Endothelial cell of umbilical vein (primary cell): ENCODE measurements at regions of chr12 and their contacts with region 1.

Region 1: GRCh38 chr12:3135522-3136461 is 58.6 kb downstream of the TSPAN9 start:
- DNase-seq: peak; percentile 69
- H3K4me3 ChIP-seq: no peak overlapping the region
- H3K27ac ChIP-seq: no peak overlapping the region
- H3K4me1 ChIP-seq: peaks cover 11% of the 10 kb centered on the region
- H3K27me3 ChIP-seq: no peaks in the 10 kb centered on the region
- CTCF ChIP-seq: peak; percentile 75 to 79
- POLR2A ChIP-seq: no peak

Region 2: GRCh38 chr12:3122835-3123678 is 12.7 kb before region 1 on chr12:
- CTCF ChIA-PET with region 1: interaction called, 19 read pairs
- POLR2A ChIA-PET with region 1: no interaction called
- dilution Hi-C with region 1: no loop called
- intact Hi-C with region 1: no loop called
- DNase-seq: peak; percentile 98
- H3K4me3 ChIP-seq: no peak overlapping the region
- H3K27ac ChIP-seq: peak overlapping the region; percentile 65
- H3K4me1 ChIP-seq: peaks cover 18% of the 10 kb centered on the region
- H3K27me3 ChIP-seq: no peaks in the 10 kb centered on the region
- CTCF ChIP-seq: peak; percentile 15 to 41
- POLR2A ChIP-seq: peak; percentile 72

Region 3: DNA sequence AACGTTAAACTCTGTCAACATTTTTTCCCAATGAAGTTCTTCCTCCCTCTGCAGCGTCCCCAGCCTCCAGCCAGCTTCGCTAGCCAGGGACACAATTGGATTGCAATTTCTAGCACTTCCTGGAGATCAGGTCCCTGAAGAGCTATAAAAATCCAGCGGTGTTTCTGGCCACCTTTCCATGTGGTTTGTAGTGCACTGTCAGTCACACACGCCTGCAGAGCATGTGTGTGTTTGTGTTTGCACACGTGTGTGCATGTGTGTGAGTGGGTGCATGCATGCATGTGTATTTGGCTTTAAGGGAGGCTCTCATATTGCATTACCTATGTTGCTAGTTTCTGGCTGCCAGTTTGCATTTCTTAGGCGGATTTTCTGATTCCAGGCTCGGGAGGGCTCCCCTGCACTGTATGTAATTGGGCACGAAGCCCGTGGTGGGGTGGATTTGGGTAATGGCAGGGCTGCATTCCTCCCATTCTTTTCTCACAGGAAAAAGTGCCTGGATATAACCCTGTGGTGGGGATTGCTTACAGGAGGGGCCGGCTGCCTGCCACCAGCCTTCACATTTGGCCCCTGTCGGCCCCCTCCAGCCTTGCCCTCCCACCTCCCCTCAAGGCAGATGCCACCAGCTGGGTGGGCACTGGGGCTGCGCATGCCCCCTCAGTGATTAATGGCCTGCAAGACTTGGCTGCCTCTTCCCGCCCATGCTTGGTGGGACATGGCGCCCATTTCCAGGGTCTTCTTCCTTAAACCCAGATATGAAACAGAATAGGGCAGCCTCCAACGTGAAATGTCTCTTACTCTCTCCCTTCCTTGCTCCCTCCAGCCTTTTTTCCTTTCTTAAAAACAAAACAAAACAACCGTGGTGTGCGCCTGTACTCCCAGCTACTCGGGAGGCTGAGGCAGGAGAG is 15.4 kb after region 1 on chr12:
- CTCF ChIA-PET with region 1: interaction called, 13 read pairs
- POLR2A ChIA-PET with region 1: no interaction called
- dilution Hi-C with region 1: no loop called
- intact Hi-C with region 1: loop called (anchors 2 kb)
- DNase-seq: peak; percentile 37
- H3K4me3 ChIP-seq: no peak overlapping the region
- H3K27ac ChIP-seq: no peak overlapping the region
- H3K4me1 ChIP-seq: peaks cover 42% of the 10 kb centered on the region
- H3K27me3 ChIP-seq: no peaks in the 10 kb centered on the region
- CTCF ChIP-seq: no peak
- POLR2A ChIP-seq: no peak

Region 4: DNA sequence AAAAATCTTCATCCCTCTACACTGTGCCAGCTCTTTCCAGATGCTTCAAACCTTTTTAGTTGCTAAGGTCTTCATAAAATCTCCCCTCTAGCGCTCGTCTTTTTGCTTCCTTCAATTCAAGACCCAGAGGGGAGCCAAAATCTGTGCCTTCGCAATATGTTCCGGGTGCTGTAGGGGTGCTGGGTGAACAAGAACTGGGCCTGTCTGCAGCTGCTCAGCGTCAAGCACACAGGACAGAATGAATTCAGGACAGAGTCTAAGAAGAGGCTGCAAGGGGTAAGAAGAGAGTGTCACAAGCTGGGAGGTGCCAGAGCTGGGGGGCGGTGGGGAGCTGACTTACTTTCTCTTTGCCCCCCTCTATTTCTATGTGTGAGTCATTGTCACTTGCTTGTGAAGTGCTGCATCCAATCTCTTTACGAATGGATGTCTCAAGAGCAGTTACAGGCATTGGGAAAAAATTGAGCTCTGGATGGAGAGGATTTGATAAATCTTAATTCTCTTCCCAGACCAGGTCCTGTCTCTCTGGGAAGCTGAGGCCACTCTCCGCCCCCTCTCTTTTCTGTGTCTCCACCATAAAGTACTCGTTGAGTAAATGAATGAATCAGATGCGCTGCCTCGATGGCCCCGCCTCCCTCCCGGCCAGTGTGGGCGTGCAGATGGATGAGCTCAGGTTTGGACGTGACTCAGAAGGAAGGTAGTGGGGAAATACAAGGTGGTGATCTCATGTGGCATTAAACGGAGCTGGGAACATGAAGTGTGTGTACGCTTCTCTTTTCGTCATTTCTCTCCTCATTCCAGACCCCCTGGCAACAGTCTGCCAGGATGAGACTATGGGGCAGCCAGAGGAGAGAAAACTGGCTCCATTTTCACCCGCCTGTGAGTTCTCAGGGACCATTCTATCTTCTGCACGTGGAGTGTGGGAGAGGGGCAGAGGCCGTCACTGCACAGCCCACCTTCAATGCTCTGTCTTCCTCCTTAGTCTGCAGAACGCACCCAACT is 32.7 kb after region 1 on chr12:
- CTCF ChIA-PET with region 1: interaction called, 12 read pairs
- POLR2A ChIA-PET with region 1: no interaction called
- dilution Hi-C with region 1: no loop called
- intact Hi-C with region 1: no loop called
- DNase-seq: no peak
- H3K4me3 ChIP-seq: no peak overlapping the region
- H3K27ac ChIP-seq: no peak overlapping the region
- H3K4me1 ChIP-seq: peaks cover 10% of the 10 kb centered on the region
- H3K27me3 ChIP-seq: no peaks in the 10 kb centered on the region
- CTCF ChIP-seq: no peak
- POLR2A ChIP-seq: no peak

Region 5: GRCh38 chr12:3202734-3203446 is 67.1 kb after region 1 on chr12:
- CTCF ChIA-PET with region 1: interaction called, 5 read pairs
- POLR2A ChIA-PET with region 1: no interaction called
- dilution Hi-C with region 1: no loop called
- intact Hi-C with region 1: loop called (anchors 1 kb)
- DNase-seq: peak; percentile 58
- H3K4me3 ChIP-seq: no peak overlapping the region
- H3K27ac ChIP-seq: no peak overlapping the region
- H3K4me1 ChIP-seq: peaks cover 22% of the 10 kb centered on the region
- H3K27me3 ChIP-seq: peaks cover 2 to 11% of the 10 kb centered on the region in 2 experiments
- CTCF ChIP-seq: peak; percentile 93 to 98
- POLR2A ChIP-seq: no peak

Region 6: DNA sequence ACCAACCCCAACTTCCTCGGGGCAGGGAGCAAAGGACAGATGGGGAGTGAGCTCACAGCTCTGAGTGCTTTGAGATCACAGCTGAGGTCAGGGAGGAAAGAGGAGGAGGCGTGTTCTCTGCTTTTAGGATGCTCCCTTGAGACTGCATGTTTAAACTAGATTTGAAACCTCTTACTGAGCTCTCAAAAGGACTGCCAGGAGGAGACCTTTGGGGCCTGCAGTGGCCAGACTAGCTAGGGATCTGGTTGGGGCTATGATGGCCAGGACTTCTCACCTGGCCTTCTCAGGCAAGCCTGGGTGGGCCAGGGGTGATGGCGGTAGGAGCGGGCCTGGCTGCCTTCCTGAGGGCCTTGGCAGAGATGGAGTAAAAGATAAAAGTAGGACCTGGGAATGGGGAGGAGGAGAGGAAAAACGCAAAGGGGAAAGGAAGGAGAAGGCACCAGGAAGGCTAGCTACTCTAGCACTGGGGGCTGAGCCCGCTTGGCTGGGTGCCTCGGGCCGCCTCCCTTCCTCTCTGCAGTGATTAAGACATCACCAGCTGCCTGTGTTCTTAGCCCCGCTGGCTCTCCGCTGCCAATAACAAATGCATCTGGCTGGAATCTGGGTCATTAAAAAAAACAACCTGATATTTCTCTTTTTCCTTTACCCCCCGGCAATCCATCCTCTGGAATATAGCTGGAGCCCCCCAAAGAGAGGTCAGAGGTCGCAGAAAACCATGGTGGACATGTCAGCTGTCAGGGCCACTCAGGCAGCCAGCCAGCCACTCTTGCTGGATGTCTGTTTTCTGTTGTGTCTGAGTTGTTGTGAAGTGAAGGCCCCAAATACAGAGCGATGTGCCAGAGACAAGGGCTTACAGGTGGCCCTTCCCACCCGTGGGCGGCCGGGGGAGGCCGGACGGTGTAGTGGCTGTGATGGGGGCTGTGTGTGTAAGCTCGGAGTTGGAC is 82.7 kb after region 1 on chr12:
- CTCF ChIA-PET with region 1: interaction called, 5 read pairs
- POLR2A ChIA-PET with region 1: no interaction called
- dilution Hi-C with region 1: no loop called
- intact Hi-C with region 1: loop called (anchors 5 kb)
- DNase-seq: peak; percentile 88
- H3K4me3 ChIP-seq: no peak overlapping the region
- H3K27ac ChIP-seq: peak overlapping the region; percentile 65
- H3K4me1 ChIP-seq: peaks cover 29% of the 10 kb centered on the region
- H3K27me3 ChIP-seq: no peaks in the 10 kb centered on the region
- CTCF ChIP-seq: peak in 1 of 2 donors; percentile 4
- POLR2A ChIP-seq: no peak